ENCODE measurements at regions of chr12 and their contacts with region 1.

Region 1: DNA sequence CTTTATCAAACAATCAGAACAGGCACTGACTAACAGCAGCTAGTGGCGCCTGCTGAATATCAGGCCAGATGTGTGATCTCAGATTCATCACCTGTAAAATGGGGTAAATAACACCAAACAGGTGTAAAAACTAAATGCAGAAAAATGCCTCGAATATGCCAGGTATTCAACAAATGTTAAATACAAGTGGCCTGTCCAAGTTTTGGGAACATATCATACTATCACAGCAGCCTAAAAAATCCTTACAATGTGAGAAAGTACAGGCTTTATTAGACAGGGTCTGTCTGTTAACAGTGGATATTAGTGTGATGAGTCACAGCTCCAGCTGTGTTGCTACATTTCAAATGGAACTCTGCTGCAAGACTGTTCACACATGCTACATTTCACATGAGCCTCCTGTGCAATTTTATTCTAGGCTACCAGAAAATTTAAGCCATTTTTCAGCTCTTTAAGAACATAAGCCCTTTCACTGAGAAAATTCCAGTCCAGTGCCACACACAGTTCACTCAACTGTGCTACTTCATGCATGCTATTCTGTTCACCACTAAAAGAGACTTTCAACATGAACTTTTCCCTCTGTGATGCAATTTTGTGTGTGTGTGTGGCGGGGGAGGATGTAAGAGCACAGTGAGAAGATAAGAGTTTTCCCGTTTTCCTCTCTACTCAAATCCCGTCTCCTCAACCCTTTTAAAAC is 56.7 kb downstream of the MSRB3 start:
- DNase-seq: peak; percentile 59
- H3K4me3 ChIP-seq: no peak overlapping the region
- H3K27ac ChIP-seq: no peak overlapping the region
- H3K4me1 ChIP-seq: peaks cover 15% of the 10 kb centered on the region
- H3K27me3 ChIP-seq: no peaks in the 10 kb centered on the region
- CTCF ChIP-seq: no peak

Region 2: GRCh38 chr12:65384240-65384639 is 49.1 kb after region 1 on chr12:
- CTCF ChIA-PET with region 1: no interaction called
- dilution Hi-C with region 1: no loop called
- in situ Hi-C with region 1: no loop called
- intact Hi-C with region 1: no loop called
- DNase-seq: no peak
- H3K4me3 ChIP-seq: no peak overlapping the region
- H3K27ac ChIP-seq: no peak overlapping the region
- H3K4me1 ChIP-seq: no peaks in the 10 kb centered on the region
- H3K27me3 ChIP-seq: no peaks in the 10 kb centered on the region
- CTCF ChIP-seq: no peak

Region 3: GRCh38 chr12:65430571-65431306 is 95.6 kb after region 1 on chr12:
- CTCF ChIA-PET with region 1: no interaction called
- dilution Hi-C with region 1: no loop called
- in situ Hi-C with region 1: no loop called
- intact Hi-C with region 1: loop called (anchors 10 kb)
- DNase-seq: peak; percentile 62
- H3K4me3 ChIP-seq: no peak overlapping the region
- H3K27ac ChIP-seq: peak overlapping the region; percentile 34
- H3K4me1 ChIP-seq: peaks cover 37% of the 10 kb centered on the region
- H3K27me3 ChIP-seq: no peaks in the 10 kb centered on the region
- CTCF ChIP-seq: no peak